ENCODE measurements at regions of chr2 and their contacts with region 1.

Region 1: GRCh38 chr2:215982080-215982875 is 31.1 kb downstream of the MREG start:
- DNase-seq: no peak
- H3K4me3 Mint-ChIP-seq: no peak overlapping the region
- H3K27ac Mint-ChIP-seq: peak overlapping the region; percentile 47
- H3K4me1 Mint-ChIP-seq: peaks cover 19% of the 10 kb centered on the region
- H3K27me3 Mint-ChIP-seq: no peaks in the 10 kb centered on the region

Region 2: DNA sequence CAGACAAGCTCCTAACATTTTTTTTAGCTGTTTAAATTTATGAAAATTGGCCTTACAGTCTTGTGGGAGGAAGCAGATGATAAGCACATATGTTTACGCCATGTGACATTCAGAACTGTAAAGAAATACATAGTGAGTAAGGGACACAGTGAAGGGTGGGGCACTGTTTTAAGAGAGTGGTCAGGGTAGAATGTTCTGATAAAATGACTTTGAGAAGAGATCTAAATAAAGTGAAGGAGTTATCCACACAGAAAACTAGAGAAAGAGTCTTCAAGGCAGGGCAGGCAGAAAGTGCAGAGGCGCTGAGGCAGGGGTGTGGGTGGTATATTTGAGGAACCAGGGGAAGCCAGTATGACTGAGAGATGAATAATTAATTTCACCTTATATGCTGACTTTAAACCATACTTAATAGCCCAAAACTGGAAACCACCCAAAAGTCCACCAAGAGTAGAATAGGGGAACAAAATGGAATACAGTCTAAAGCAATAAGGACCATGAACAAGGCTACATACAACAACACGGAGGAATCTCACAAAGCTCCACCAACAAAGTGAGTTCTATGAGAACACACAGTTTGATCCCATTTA is 22.5 kb after region 1 on chr2:
- intact Hi-C with region 1: loop called (anchors 2 kb)
- DNase-seq: no peak
- H3K4me3 Mint-ChIP-seq: peak overlapping the region; percentile 2
- H3K27ac Mint-ChIP-seq: peak overlapping the region; percentile 50
- H3K4me1 Mint-ChIP-seq: peaks cover 45% of the 10 kb centered on the region
- H3K27me3 Mint-ChIP-seq: no peaks in the 10 kb centered on the region